Naive thymus-derived CD8-positive, alpha-beta T cell (primary cell): ENCODE measurements at regions of chr15 and their contacts with region 1.

Region 1: DNA sequence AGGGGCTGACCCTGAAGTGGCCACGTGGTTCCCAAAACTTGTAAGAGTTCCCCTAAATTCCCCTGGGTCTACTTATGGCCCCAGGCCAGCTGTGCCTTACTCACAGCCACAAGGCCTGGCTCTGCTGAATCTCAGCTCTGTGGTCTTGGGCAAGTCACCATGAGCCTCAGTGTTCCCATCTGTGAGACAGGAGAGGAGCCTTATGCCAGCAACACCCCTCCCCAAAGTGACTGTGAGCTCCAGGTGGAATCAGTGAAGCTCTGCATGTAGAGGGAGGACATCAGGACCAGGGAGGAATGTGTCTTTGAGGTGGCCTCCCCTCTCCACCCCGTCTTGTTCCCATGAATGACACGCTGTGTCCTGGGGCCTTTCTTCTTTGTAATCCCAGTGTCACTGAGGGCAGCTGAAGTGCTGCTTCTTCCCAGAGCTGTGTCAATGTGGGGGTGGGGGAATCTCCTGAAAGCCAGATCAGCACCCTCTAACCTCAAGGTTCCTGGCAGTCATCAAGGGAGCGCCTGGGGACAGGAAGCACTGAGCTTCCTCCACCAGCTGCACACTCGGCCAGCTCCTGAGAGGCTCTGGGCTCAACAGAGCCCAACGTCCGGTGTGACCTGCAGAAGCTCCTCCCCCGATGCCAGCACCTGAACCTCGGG is 258.9 kb downstream of the UACA start:
- DNase-seq: no peak
- ATAC-seq: peak; percentile 58 to 61
- H3K4me3 Mint-ChIP-seq: peak overlapping the region; percentile 22 to 85 (median 64)
- H3K27ac Mint-ChIP-seq: peak overlapping the region in 4 of 10 donors; percentile 22 to 82 (median 74)
- H3K4me1 Mint-ChIP-seq: peaks cover 23 to 66% (median 52%) of the 10 kb centered on the region in 4 donors
- H3K27me3 Mint-ChIP-seq: no peaks in the 10 kb centered on the region

Region 2: DNA sequence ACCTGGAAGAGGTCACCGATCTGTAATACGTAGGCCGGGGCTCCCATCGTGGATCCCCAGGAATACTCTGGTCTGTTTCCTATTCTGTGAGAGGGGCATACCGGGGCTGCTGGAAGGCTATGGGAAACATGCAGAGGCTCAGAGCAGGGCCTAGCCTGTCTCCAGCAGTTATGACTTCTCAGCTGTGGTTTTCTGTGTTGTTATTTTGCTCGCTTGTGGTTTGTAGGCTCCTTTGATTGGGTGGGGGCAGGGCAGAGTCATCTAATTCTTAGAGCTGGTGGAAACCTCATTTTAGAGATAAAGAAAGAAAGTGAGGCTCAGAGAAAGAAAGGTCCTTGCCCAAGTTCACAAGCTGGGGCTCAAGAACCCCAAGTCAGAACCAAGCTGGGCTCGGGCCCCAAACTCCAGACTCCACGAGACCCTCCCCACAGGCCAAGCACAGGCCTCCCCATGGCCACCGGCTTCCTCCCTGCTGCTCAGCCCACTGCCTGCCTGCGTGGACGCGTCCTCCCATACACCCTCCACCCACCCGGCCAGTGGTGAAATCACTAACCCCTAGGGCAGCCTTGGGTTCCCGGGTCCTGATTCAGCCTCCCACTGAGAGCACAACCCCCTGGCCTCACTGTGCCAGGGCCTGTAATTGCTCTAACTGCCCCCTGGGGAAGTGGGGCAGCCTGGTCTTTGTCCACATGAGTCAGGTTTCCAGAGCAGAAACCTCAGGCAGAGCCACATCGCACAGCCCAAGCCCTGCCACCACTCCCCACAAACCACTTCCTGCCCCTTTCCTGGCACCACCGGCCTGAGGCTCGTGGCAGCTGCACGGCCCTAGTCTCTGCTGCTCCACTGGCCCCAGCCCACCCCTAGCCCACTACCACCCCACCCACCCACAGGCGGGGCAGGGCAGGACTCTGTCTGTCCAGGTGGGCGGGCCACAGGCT is 11.9 kb before region 1 on chr15:
- POLR2A ChIA-PET with region 1: interaction called, 24 read pairs
- DNase-seq: peak; percentile 37 to 89 (median 77)
- ATAC-seq: peak; percentile 78 to 90
- H3K4me3 Mint-ChIP-seq: peak overlapping the region; percentile 61 to 90 (median 76)
- H3K27ac Mint-ChIP-seq: peak overlapping the region; percentile 9 to 92 (median 78)
- H3K4me1 Mint-ChIP-seq: peaks cover 59 to 87% (median 82%) of the 10 kb centered on the region in 4 donors
- H3K27me3 Mint-ChIP-seq: peaks cover 0 to 6% (median 0%) of the 10 kb centered on the region in 5 donors

Region 3: DNA sequence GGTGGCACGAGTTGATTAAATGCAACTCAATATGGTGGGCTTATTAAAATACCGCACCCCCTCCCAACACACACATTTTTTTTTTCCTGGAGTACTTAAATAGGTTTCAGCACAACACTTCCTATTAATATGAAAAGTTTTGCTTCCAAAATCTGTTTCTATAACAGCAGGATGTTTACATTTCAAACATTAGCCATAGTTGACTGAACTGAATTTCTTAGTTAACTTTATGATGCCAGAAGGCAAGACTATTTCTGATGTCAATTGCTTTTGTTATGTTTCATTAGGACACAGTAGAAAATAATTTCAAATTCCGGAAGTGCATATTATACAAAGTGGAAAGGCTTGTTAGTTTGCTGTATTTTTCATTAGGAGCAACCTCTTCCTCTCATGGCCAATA is 154.2 kb after region 1 on chr15:
- POLR2A ChIA-PET with region 1: no interaction called
- DNase-seq: no peak
- ATAC-seq: no peak
- H3K4me3 Mint-ChIP-seq: no peak overlapping the region
- H3K27ac Mint-ChIP-seq: no peak overlapping the region
- H3K4me1 Mint-ChIP-seq: peaks cover 0 to 6% (median 3%) of the 10 kb centered on the region in 4 donors
- H3K27me3 Mint-ChIP-seq: peaks cover 0 to 2% (median 0%) of the 10 kb centered on the region in 5 donors